ENCODE measurements at regions of chr15 and their contacts with region 1.

Region 1: GRCh38 chr15:80970018-80970658 is 19.5 kb downstream of the MESD start:
- DNase-seq: peak; percentile 59 to 79
- ATAC-seq: peak; percentile 83 to 93
- H3K4me3 ChIP-seq: no peak overlapping the region
- H3K27ac ChIP-seq: no peak overlapping the region
- H3K4me1 ChIP-seq: no peaks in the 10 kb centered on the region
- CTCF ChIP-seq: peak; percentile 98
- EP300 ChIP-seq: no peak
- POLR2A ChIP-seq: no peak
- RAD21 ChIP-seq: peak; percentile 98 to 99

Region 2: GRCh38 chr15:80545078-80545477 is 425.1 kb before region 1 on chr15:
- CTCF ChIA-PET with region 1: no interaction called
- POLR2A ChIA-PET with region 1: no interaction called
- DNase-seq: no peak
- ATAC-seq: no peak
- H3K4me3 ChIP-seq: no peak overlapping the region
- H3K27ac ChIP-seq: no peak overlapping the region
- H3K4me1 ChIP-seq: peaks cover 12% of the 10 kb centered on the region
- CTCF ChIP-seq: no peak
- EP300 ChIP-seq: no peak
- POLR2A ChIP-seq: no peak
- RAD21 ChIP-seq: no peak

Region 3: DNA sequence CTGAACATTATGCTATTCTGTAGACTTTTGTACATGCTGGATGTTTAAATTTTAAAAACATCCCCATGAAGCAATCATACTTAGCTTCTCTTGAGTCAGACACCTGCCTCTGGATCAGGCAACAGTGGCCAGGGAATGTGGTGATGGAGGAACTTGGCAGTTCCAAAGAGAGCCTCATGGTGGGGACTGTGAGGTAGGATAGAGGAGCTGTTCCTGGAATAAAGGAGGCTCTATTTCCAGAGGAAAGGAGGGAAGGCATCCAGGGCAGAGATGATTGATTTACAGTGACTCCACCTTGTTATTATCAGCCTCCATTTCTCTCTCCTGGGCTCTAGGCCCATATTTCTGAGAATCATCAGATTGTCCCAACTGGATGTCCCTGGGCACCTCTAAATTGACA is 310.0 kb before region 1 on chr15:
- CTCF ChIA-PET with region 1: interaction called, 11 read pairs
- POLR2A ChIA-PET with region 1: no interaction called
- DNase-seq: peak; percentile 55 to 63
- ATAC-seq: peak; percentile 98 to 100
- H3K4me3 ChIP-seq: no peak overlapping the region
- H3K27ac ChIP-seq: no peak overlapping the region
- H3K4me1 ChIP-seq: no peaks in the 10 kb centered on the region
- CTCF ChIP-seq: peak; percentile 53
- EP300 ChIP-seq: no peak
- POLR2A ChIP-seq: no peak
- RAD21 ChIP-seq: peak; percentile 60 to 73

Region 4: GRCh38 chr15:80804965-80805495 is 165.1 kb before region 1 on chr15:
- CTCF ChIA-PET with region 1: interaction called, 21 read pairs
- POLR2A ChIA-PET with region 1: no interaction called
- DNase-seq: peak in 1 of 2 experiments; percentile 49
- ATAC-seq: peak; percentile 44 to 82; a peak in 4 of 6 replicates
- H3K4me3 ChIP-seq: no peak overlapping the region
- H3K27ac ChIP-seq: no peak overlapping the region
- H3K4me1 ChIP-seq: peaks cover 13% of the 10 kb centered on the region; the same call in 2 of the 3 replicates
- CTCF ChIP-seq: no peak
- EP300 ChIP-seq: no peak
- POLR2A ChIP-seq: no peak
- RAD21 ChIP-seq: no peak

Region 5: DNA sequence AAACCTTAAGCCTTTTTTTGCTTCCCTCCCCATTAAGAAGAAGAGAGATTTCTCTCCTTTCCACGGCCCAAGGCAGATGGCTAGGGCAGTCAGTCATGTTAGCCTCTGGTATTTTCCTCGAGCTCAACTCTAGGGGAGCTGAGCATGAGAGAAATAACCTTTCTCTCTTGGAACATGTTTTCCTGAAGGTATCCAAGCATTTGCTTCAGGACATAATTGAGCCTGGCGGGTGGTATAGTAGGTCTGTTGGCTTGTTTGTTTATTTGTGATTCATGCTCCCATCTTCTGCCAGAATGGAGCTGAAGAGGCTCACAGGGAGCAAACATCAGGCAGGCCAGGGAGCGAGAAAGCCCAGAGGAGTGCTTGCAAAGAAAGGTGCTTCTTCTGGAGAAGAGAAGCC is 83.0 kb before region 1 on chr15:
- CTCF ChIA-PET with region 1: interaction called, 10 read pairs
- POLR2A ChIA-PET with region 1: no interaction called
- DNase-seq: peak; percentile 21 to 41
- ATAC-seq: peak; percentile 71 to 88
- H3K4me3 ChIP-seq: no peak overlapping the region
- H3K27ac ChIP-seq: no peak overlapping the region
- H3K4me1 ChIP-seq: peaks cover 18% of the 10 kb centered on the region
- CTCF ChIP-seq: no peak
- EP300 ChIP-seq: no peak
- POLR2A ChIP-seq: no peak
- RAD21 ChIP-seq: no peak

Region 6: DNA sequence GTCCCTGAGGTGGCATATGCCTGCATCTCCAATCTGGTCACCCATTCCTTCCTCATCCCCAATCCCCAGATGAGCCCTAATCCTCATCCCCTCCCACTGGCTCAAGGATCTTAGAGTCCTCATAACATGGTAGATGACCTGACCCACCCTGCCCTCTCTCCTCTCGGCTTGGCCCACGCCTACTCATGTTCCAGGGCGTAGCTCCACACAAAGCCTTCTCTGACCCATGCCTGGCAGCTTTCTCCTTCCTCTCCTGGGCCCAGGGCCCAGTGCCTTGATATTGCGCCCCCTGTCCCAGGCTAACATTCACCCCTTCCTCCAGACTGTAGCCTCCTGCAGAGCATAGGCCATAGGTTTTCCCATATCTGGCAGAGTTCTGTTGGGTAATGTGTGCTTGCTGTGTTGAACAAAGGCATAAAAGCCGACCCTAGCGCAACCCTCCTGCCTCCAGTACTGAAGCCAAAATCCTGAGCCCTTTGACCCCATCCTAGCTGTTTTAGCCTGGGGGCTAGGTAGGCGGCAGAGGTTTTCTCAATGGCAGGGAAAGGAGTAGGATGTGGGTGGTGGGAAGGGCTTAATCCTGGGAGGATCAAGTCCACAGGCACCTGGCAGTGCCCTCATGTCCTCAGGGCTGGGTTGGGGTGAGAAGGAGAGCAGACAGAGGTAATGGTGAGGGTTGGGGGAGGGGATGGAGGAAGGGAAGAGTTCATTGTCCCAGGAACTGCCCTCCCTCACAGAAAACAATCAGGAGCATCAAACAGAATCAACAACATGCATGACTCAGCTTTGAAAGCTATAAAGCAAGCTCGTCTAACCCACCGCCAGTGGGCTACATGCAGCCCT is 16.0 kb before region 1 on chr15:
- CTCF ChIA-PET with region 1: interaction called, 111 read pairs
- POLR2A ChIA-PET with region 1: no interaction called
- DNase-seq: peak in 1 of 2 experiments; percentile 30
- ATAC-seq: no peak
- H3K4me3 ChIP-seq: no peak overlapping the region
- H3K27ac ChIP-seq: peak overlapping the region; percentile 12 to 70; a peak in 3 of 6 replicates
- H3K4me1 ChIP-seq: peaks cover 27% of the 10 kb centered on the region
- CTCF ChIP-seq: no peak
- EP300 ChIP-seq: no peak
- POLR2A ChIP-seq: no peak
- RAD21 ChIP-seq: no peak

Region 7: DNA sequence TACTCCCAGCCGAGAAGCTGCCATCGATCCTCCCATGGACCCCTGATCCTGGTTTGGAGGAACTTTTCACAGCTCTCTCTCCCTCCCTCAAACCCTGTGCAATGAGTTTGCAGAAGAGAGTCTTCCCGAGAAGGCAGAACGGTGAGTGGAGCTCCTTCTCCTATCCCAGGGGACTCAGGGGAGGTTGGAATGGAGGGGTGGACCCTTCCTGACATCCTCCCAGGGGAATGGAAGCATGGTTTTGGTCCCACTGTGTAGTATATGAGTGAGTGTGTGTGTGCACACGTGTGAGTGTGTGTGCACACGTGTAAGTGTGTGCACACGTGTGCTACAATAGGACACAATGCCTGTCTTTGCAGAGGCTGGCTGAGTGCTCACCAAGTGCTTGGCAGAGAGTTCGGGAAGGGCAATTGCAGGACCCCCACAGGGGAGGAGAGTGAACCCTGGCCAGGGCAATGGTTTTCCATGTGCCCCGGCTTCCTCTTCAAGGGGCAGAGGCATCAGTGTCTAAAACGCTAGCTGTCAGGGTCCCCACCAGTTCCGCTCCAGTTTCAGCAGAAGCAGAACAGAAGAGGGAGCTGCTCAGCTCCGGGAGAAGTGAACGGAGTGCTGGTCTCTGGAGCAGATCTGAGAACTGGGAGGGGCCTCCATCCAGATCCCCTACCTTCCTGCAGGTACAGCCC is 212.8 kb after region 1 on chr15:
- CTCF ChIA-PET with region 1: no interaction called
- POLR2A ChIA-PET with region 1: no interaction called
- DNase-seq: no peak
- ATAC-seq: peak in 1 of 2 experiments; percentile 54; a peak in 3 of 6 replicates
- H3K4me3 ChIP-seq: no peak overlapping the region
- H3K27ac ChIP-seq: no peak overlapping the region
- H3K4me1 ChIP-seq: no peaks in the 10 kb centered on the region
- CTCF ChIP-seq: no peak
- EP300 ChIP-seq: no peak
- POLR2A ChIP-seq: no peak
- RAD21 ChIP-seq: no peak

Measured in A549 (cell line).